ENCODE measurements at regions of chr19 and their contacts with region 1.

Region 1: DNA sequence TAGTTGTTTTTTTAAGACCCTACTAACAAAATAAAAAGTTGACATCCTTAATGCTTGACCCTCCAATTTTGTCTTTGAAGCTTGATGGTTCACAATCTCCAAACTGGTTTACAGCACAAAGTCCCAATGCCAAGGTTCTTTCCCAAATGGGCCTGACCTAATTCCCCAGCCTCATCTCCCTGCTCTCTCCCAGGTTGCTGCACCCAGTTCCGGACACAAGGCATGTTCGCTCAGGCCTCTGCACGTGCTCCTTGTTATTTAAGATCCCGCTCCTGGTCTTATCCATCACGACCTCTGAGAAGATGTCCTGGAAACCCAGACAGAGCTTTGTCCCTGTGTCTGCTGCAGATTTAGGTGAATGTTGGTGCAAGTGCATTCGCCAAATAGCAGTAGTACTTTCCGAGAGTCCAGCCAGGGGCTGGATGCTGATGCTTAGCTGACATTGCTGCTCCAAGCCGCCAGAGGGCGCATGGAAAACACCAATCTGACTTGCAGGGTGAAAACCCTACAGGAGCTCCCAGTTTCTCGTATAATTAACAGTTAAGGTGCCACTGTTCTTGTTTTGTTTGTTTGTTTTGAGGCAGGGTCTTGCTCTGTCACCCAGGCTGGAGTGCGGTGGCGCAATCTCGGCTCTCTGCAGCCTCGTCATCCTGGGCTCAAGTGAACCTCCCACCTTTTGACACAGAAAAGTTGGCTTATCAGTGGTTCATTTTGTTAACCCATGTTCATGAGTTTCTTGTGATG is 18.5 kb downstream of the LYPD3 start:
- DNase-seq: peak; percentile 82
- H3K4me3 ChIP-seq: peak overlapping the region in 1 of 2 experiments; percentile 24; a peak in 1 of 4 replicates
- H3K27ac ChIP-seq: no peak overlapping the region
- H3K4me1 ChIP-seq: no peaks in the 10 kb centered on the region
- H3K27me3 ChIP-seq: peaks cover 12% of the 10 kb centered on the region; the same call in 1 of the 2 replicates
- CTCF ChIP-seq: peak; percentile 93
- EP300 ChIP-seq: no peak
- RAD21 ChIP-seq: peak; percentile 94

Region 2: DNA sequence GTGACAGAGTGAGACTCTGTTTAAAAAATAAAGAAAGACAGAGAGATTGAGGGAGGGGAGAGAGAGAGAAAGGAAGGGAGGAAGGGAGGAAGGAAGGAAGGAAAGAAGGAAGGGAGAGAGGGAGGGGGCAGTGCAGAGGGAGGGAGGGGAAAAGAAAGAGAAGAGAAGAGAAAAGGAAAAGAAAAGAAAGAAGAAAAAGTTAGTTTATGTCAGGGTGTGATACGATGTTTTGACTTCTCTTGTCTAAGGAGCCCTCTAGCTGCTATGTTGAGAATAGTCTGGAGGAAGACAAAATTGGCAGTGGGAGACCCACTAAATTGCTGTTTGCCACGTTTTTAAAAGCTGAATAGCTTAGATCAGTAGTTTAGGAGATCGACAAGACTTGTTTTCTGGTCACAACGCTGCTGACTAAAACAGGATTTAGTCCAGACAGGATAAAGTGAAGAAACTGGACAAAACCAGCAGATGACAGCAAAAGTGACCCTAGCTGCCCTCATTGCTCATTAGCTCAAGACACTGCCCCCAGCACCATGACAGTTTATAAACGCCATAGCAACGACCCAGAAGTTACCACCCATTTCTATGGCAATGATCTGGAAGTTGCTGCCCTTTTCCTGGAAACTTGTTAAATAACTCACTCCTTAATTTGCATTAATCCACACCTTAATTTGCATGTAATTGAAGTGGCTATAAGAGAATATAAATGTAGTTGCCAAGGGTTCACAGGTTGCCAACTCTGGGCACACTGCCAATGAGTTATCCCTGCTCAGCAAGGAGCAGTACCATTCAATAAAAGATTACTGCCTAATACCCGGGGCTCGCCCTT is 21.1 kb before region 1 on chr19:
- CTCF ChIA-PET with region 1: interaction called, 47 read pairs
- POLR2A ChIA-PET with region 1: no interaction called
- DNase-seq: no peak
- H3K4me3 ChIP-seq: no peak overlapping the region
- H3K27ac ChIP-seq: no peak overlapping the region
- H3K4me1 ChIP-seq: no peaks in the 10 kb centered on the region
- H3K27me3 ChIP-seq: peaks cover 22% of the 10 kb centered on the region; the same call in 1 of the 2 replicates
- CTCF ChIP-seq: peak; percentile 57
- EP300 ChIP-seq: no peak
- RAD21 ChIP-seq: peak; percentile 34; the same call in 1 of the 2 replicates

Region 3: DNA sequence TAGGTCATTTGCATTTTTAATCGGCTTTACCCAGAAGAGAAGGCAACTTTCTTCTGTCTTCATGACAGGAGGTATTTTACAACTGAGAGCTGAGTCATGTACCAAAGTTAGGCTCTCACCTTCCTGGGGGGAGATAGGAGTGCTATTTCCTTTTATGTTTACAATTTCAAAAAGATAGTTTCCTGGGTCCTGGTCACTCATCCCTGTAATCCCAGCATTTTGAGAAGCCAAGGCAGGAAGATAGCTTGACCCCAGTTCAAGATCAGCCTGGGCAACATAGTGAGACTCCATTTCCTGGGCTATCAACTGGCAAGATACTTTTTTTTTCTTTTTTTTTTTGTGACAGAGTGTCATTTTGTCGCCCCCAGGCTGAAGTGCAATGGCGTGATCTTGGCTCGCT is 10.9 kb after region 1 on chr19:
- CTCF ChIA-PET with region 1: interaction called, 30 read pairs
- POLR2A ChIA-PET with region 1: no interaction called
- DNase-seq: no peak
- H3K4me3 ChIP-seq: no peak overlapping the region
- H3K27ac ChIP-seq: no peak overlapping the region
- H3K4me1 ChIP-seq: peaks cover 2 to 5% of the 10 kb centered on the region in 2 experiments; a peak in 2 of 4 replicates
- H3K27me3 ChIP-seq: no peaks in the 10 kb centered on the region
- CTCF ChIP-seq: no peak
- EP300 ChIP-seq: no peak
- RAD21 ChIP-seq: no peak

Region 4: GRCh38 chr19:43474986-43475705 is 28.2 kb after region 1 on chr19:
- CTCF ChIA-PET with region 1: interaction called, 14 read pairs
- POLR2A ChIA-PET with region 1: no interaction called
- DNase-seq: peak; percentile 99
- H3K4me3 ChIP-seq: peak overlapping the region; percentile 18 to 35; a peak in 3 of 4 replicates
- H3K27ac ChIP-seq: peak overlapping the region; percentile 29 to 48; a peak in 2 of 4 replicates
- H3K4me1 ChIP-seq: peaks cover 3 to 5% of the 10 kb centered on the region in 2 experiments; a peak in 2 of 4 replicates
- H3K27me3 ChIP-seq: no peaks in the 10 kb centered on the region
- CTCF ChIP-seq: no peak
- EP300 ChIP-seq: no peak
- RAD21 ChIP-seq: no peak

Region 5: DNA sequence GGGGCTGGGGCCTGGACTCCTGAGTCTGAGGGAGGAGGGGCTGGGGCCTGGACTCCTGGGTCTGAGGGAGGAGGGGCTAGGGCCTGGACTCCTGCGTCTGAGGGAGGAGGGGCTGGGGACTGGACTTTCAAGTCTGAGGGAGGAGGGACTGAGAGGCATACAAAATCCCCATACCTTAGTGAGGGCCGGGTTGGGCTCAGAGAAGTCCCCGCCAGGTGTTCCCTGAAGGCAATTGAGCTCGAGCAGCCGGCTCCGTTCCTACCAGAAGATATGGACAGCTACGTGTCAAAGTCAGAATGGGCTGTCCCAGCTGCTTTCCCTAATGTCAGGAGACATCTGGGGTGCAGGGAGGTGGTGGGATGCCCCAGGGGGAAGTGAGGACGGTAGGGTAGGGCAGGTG is 48.2 kb after region 1 on chr19:
- CTCF ChIA-PET with region 1: interaction called, 13 read pairs
- POLR2A ChIA-PET with region 1: no interaction called
- DNase-seq: no peak
- H3K4me3 ChIP-seq: no peak overlapping the region
- H3K27ac ChIP-seq: no peak overlapping the region
- H3K4me1 ChIP-seq: no peaks in the 10 kb centered on the region
- H3K27me3 ChIP-seq: no peaks in the 10 kb centered on the region
- CTCF ChIP-seq: no peak
- EP300 ChIP-seq: no peak
- RAD21 ChIP-seq: no peak

Region 6: DNA sequence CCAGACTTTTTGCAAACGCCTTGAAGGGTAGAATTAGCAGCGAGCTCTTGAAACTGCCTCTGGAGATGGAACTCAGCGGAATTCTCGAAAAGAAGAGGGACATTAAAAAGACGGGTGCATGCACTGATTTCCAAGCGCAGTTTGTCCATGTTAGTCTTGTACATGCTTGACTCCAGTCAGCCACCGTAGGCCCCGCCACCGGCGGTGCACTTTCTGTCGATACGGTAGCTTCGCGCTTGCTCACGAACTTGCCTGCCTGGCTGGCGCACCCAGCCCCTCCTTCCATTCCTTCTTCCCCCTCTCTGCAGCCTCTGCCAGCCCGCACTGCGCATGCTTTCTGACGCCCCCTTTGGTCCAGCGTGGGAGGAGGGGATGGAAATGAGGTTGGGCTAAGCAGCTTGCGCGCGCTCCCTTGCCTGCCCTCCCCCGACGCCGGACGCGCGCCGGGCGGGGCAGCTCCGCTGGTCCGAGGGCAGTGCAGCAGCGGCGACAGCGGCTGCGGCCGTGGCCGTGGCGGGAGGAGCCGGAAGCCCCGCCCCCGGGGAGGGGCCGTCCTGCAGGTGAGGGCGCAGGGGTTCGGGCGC is 86.1 kb after region 1 on chr19 and contains the start of gene ZNF575:
- CTCF ChIA-PET with region 1: interaction called, 632 read pairs
- POLR2A ChIA-PET with region 1: no interaction called
- DNase-seq: peak; percentile 93
- H3K4me3 ChIP-seq: peak within 1 kb of the TSS; percentile 59 to 63
- H3K27ac ChIP-seq: peak within 1 kb of the TSS; percentile 78 to 95
- H3K4me1 ChIP-seq: peaks cover 0 to 10% of the 10 kb centered on the region in 2 experiments; a peak in 1 of 4 replicates
- H3K27me3 ChIP-seq: no peaks in the 10 kb centered on the region
- CTCF ChIP-seq: no peak
- EP300 ChIP-seq: no peak; a peak in 1 of 4 replicates
- RAD21 ChIP-seq: no peak
- polyA plus RNA-seq, gene ZNF575: 0.31 and 1.0 TPM in 2 replicates